ENCODE measurements at regions of chr4 and their contacts with region 1.

Region 1: GRCh38 chr4:20422398-20422797 is 170.7 kb downstream of the SLIT2 start:
- DNase-seq: no peak
- ATAC-seq: peak; percentile 63

Region 2: DNA sequence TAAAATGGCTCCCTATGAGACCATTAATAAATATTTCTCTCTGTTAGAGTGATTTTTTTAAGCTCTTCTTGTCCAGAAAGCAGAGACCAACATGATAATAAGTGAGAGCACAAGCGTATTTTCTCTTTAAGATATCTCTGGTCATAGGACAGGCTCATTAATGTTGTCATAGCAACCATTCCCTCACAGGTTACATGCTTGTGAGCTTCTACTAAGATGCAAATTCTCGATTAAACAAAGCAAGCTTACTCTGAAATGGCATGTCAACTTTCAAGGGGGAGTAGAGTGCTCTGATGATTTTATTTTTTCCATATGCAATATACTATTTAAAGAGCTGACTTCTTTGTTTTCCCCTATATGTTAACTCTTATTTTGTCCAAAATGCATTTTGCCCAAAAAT is 1913.6 kb before region 1 on chr4:
- intact Hi-C with region 1: loop called (anchors 5 kb)
- DNase-seq: no peak
- ATAC-seq: no peak

Region 3: GRCh38 chr4:18735740-18736268 is 1686.6 kb before region 1 on chr4:
- intact Hi-C with region 1: no loop called
- DNase-seq: no peak
- ATAC-seq: no peak

Region 4: GRCh38 chr4:20192754-20193538 is 229.5 kb before region 1 on chr4:
- intact Hi-C with region 1: no loop called
- DNase-seq: no peak
- ATAC-seq: no peak

Region 5: GRCh38 chr4:20684852-20685763 is 262.7 kb after region 1 on chr4:
- intact Hi-C with region 1: loop called (anchors 10 kb)
- DNase-seq: no peak
- ATAC-seq: no peak